Activated CD8-positive, alpha-beta T cell treated with anti-CD3 and anti-CD28 coated beads for 36 hours (primary cell): ENCODE measurements at regions of chr10 and their contacts with region 1.

Region 1: DNA sequence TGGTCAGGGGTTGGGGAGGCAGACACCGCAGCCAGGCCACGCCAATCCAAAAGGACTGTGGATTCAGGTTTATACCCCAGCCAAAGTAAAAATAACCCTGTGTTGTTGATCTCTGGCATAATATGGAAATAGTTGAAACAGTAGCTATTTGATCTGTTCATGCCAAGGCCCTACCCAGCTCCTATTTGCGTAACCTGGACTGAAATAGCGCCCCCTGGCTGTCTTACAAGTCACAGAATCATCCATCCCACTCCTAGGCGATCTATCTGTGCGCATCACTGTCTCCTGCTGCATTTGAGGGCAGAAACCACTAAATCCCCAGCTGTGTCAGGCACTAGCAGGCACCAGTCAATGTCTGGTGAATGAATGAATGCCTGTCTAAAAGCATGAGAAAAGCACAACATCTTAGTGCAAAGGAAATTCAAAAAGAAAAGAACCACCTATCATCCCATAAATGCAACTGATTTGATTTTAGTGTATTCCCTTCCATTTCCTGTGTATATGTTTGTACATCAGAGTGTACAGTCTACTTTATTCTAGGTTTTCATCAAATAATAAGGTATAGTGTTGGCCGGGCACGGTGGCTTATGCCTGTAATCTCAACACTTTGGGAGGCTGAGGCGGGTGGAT is 160.0 kb downstream of the SLIT1 start:
- DNase-seq: peak; percentile 81
- ATAC-seq: peak; percentile 78
- H3K4me3 Mint-ChIP-seq: no peak overlapping the region
- H3K27ac Mint-ChIP-seq: no peak overlapping the region
- H3K4me1 Mint-ChIP-seq: peaks cover 5% of the 10 kb centered on the region
- H3K27me3 Mint-ChIP-seq: peaks cover 1% of the 10 kb centered on the region
- CTCF ChIP-seq: peak; percentile 78

Region 2: GRCh38 chr10:96642973-96643372 is 382.8 kb before region 1 on chr10:
- CTCF ChIA-PET with region 1: interaction called, 13 read pairs
- POLR2A ChIA-PET with region 1: no interaction called
- intact Hi-C with region 1: loop called (anchors 10 kb)
- DNase-seq: peak; percentile 95
- ATAC-seq: peak; percentile 86
- H3K4me3 Mint-ChIP-seq: no peak overlapping the region
- H3K27ac Mint-ChIP-seq: no peak overlapping the region
- H3K4me1 Mint-ChIP-seq: peaks cover 21% of the 10 kb centered on the region
- H3K27me3 Mint-ChIP-seq: no peaks in the 10 kb centered on the region
- CTCF ChIP-seq: peak; percentile 68

Region 3: GRCh38 chr10:96910488-96911395 is 115.0 kb before region 1 on chr10:
- CTCF ChIA-PET with region 1: interaction called, 46 read pairs
- POLR2A ChIA-PET with region 1: no interaction called
- intact Hi-C with region 1: no loop called
- DNase-seq: peak; percentile 15
- ATAC-seq: peak; percentile 80
- H3K4me3 Mint-ChIP-seq: no peak overlapping the region
- H3K27ac Mint-ChIP-seq: no peak overlapping the region
- H3K4me1 Mint-ChIP-seq: peaks cover 33% of the 10 kb centered on the region
- H3K27me3 Mint-ChIP-seq: no peaks in the 10 kb centered on the region
- CTCF ChIP-seq: peak; percentile 65

Region 4: GRCh38 chr10:96978621-96979154 is 47.0 kb before region 1 on chr10:
- CTCF ChIA-PET with region 1: interaction called, 41 read pairs
- POLR2A ChIA-PET with region 1: no interaction called
- intact Hi-C with region 1: no loop called
- DNase-seq: peak; percentile 17
- ATAC-seq: peak; percentile 91
- H3K4me3 Mint-ChIP-seq: peak overlapping the region; percentile 2
- H3K27ac Mint-ChIP-seq: peak overlapping the region; percentile 85
- H3K4me1 Mint-ChIP-seq: peaks cover 22% of the 10 kb centered on the region
- H3K27me3 Mint-ChIP-seq: no peaks in the 10 kb centered on the region
- CTCF ChIP-seq: no peak

Region 5: DNA sequence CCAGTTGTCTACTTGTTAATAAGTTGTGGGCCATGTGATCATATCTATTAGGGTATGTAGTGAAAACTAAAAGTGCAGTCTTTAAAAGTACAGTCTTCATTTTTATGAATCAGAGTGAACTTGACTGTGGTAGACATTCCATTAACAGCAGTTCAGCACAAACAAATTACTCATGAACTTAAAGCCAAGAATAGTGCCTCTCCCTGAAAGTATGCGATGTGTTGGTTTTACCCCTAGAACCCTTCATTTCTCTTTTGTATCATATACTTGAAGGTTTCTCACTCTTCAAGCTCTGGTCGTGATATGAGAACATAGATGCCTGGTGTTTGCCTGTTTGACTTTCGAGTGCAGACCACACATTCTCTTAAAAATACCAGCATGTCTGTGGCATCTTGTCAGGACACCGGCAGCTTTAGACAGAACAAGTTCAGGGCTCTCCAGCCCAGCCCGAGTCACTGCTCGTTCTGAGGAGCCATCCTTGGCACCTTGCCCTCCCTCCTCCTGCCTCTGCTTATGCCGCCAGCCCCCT is 34.4 kb before region 1 on chr10:
- CTCF ChIA-PET with region 1: interaction called, 41 read pairs
- POLR2A ChIA-PET with region 1: interaction called, 3 read pairs
- intact Hi-C with region 1: no loop called
- DNase-seq: no peak
- ATAC-seq: peak; percentile 60
- H3K4me3 Mint-ChIP-seq: no peak overlapping the region
- H3K27ac Mint-ChIP-seq: no peak overlapping the region
- H3K4me1 Mint-ChIP-seq: peaks cover 3% of the 10 kb centered on the region
- H3K27me3 Mint-ChIP-seq: no peaks in the 10 kb centered on the region
- CTCF ChIP-seq: no peak

Region 6: GRCh38 chr10:97037365-97038361 is 11.9 kb after region 1 on chr10:
- CTCF ChIA-PET with region 1: interaction called, 125 read pairs
- POLR2A ChIA-PET with region 1: no interaction called
- intact Hi-C with region 1: no loop called
- DNase-seq: peak; percentile 85
- ATAC-seq: peak; percentile 98
- H3K4me3 Mint-ChIP-seq: peak overlapping the region; percentile 46
- H3K27ac Mint-ChIP-seq: no peak overlapping the region
- H3K4me1 Mint-ChIP-seq: peaks cover 9% of the 10 kb centered on the region
- H3K27me3 Mint-ChIP-seq: peaks cover 8% of the 10 kb centered on the region
- CTCF ChIP-seq: peak; percentile 97

Region 7: GRCh38 chr10:97096261-97097083 is 70.7 kb after region 1 on chr10:
- CTCF ChIA-PET with region 1: no interaction called
- POLR2A ChIA-PET with region 1: no interaction called
- intact Hi-C with region 1: no loop called
- DNase-seq: peak; percentile 61
- ATAC-seq: peak; percentile 79
- H3K4me3 Mint-ChIP-seq: no peak overlapping the region
- H3K27ac Mint-ChIP-seq: no peak overlapping the region
- H3K4me1 Mint-ChIP-seq: peaks cover 28% of the 10 kb centered on the region
- H3K27me3 Mint-ChIP-seq: peaks cover 15% of the 10 kb centered on the region
- CTCF ChIP-seq: no peak

Region 8: GRCh38 chr10:97196223-97197029 is 170.7 kb after region 1 on chr10:
- CTCF ChIA-PET with region 1: interaction called, 11 read pairs
- POLR2A ChIA-PET with region 1: no interaction called
- intact Hi-C with region 1: no loop called
- DNase-seq: peak; percentile 81
- ATAC-seq: peak; percentile 91
- H3K4me3 Mint-ChIP-seq: peak overlapping the region; percentile 70
- H3K27ac Mint-ChIP-seq: no peak overlapping the region
- H3K4me1 Mint-ChIP-seq: peaks cover 13% of the 10 kb centered on the region
- H3K27me3 Mint-ChIP-seq: peaks cover 24% of the 10 kb centered on the region
- CTCF ChIP-seq: peak; percentile 84